ENCODE measurements at regions of chr1 and their contacts with region 1.

Region 1: DNA sequence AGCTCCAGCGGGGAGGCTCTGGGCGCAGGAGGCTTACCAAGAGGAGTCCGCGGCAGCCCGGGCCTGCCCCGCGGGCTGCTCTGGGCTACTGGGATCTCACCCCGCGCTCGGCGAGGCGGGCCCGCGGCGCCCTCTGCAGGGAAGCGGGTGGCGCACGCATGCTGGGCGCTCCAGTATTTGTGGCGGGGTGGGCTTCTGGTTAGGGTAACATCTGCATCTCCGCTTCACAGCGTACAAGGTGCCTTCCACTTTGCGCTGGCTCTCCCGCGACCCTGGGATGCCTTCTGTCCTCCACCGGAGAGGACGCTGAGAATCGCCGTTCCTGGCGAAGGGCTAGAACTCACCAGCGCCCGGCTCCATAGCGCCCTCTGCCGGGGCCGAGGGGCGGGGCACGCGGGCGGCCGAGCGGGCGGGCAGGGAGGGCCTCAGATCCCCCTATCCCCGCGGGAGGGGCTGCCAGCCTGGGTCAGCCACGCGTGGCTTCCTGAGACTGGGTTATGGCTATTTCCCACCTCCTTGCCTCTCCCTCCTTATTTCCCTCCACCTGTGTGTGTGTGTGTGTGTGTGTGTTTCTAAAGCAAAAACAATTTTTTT is 46.6 kb upstream of the CTBS start:
- DNase-seq: peak; percentile 88
- CTCF ChIP-seq: peak; percentile 82

Region 2: GRCh38 chr1:84433258-84434080 is 187.3 kb before region 1 on chr1:
- CTCF ChIA-PET with region 1: interaction called, 11 read pairs
- POLR2A ChIA-PET with region 1: no interaction called
- DNase-seq: peak; percentile 49
- CTCF ChIP-seq: peak; percentile 70

Region 3: GRCh38 chr1:84442256-84442655 is 178.6 kb before region 1 on chr1:
- CTCF ChIA-PET with region 1: interaction called, 78 read pairs
- POLR2A ChIA-PET with region 1: no interaction called
- DNase-seq: peak; percentile 65
- CTCF ChIP-seq: peak; percentile 52

Region 4: GRCh38 chr1:84450910-84451309 is 169.9 kb before region 1 on chr1:
- CTCF ChIA-PET with region 1: interaction called, 78 read pairs
- POLR2A ChIA-PET with region 1: no interaction called
- DNase-seq: no peak
- CTCF ChIP-seq: no peak

Region 5: GRCh38 chr1:84603941-84604830 is 16.6 kb before region 1 on chr1:
- CTCF ChIA-PET with region 1: interaction called, 23 read pairs
- POLR2A ChIA-PET with region 1: no interaction called
- DNase-seq: no peak
- CTCF ChIP-seq: no peak

Region 6: DNA sequence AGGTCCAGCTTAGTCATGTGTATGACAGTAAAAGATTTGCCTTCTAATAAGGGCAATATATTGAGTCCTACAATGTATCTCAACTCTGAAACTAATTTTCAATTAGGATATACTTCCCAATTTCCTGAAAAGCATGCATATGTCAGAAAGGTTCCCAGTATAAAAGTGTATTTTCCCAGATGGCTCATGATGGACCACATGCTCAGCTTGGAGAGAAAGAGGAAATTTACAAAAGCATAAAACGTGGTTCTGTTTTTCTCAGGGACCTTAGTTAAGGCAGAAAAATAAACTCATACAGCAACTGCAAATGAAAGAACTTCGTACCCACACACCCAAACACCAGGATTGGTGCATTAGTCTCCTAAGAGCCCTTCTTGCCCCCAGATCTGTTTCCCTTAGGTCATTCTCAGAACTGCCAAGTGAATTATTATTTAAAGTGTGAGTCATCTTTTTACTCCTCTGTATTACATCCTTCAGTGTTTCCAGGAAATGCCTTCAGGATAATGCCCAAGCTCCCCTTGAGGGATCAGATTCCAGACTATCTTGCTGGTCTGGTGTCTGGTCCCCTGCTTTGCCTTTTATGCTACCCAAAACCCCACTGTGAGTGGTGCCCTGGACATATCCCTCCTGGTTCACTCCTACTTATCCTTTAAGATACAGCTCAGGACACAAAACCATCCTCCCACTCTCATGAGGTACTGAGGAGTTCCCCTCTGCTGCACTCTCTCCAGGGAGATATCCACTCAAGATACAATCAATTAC is 12.0 kb after region 1 on chr1:
- CTCF ChIA-PET with region 1: interaction called, 13 read pairs
- POLR2A ChIA-PET with region 1: no interaction called
- DNase-seq: no peak
- CTCF ChIP-seq: no peak